ENCODE measurements at regions of chr9 and their contacts with region 1.

Region 1: GRCh38 chr9:83334320-83334719 is 203.9 kb downstream of the FRMD3 start:
- DNase-seq: peak; percentile 24
- ATAC-seq: peak; percentile 21
- H3K4me3 Mint-ChIP-seq: no peak overlapping the region
- H3K27ac Mint-ChIP-seq: no peak overlapping the region
- H3K4me1 Mint-ChIP-seq: no peaks in the 10 kb centered on the region
- H3K27me3 Mint-ChIP-seq: no peaks in the 10 kb centered on the region
- CTCF ChIP-seq: no peak

Region 2: DNA sequence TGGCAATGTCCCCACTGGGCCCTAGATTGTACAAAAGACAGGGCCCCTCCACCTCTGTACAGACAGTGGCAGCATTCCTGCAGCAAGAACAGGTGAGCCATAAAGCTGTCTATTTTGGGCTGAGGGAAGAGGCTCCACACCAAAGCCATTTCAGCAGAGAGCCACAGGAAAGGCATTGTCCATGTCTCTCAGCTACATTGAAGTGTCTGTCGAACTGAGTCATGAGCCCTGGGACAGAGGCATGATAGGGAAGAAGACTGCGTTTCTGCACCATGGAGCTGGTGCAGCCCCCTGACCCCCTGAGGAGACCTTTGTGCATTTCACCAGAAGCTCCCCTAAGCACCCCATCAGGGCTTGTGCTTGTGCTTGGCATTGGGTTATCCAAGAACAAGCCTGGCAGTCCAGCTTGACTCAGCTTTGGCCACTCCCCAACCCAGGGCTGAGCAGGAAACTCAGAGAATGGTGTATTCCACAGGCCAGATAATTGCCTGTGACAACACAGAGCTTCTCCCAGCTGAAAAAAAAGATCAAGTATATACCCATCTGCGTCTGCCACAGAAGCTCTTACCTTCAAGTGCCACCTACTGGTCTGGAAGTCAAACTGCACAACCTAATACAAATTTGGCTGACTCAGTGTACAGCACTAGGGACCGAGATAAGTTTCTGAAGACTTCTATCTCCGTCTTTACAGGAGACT is 209.8 kb after region 1 on chr9:
- CTCF ChIA-PET with region 1: interaction called, 34 read pairs
- POLR2A ChIA-PET with region 1: no interaction called
- intact Hi-C with region 1: no loop called
- DNase-seq: no peak
- ATAC-seq: no peak
- H3K4me3 Mint-ChIP-seq: no peak overlapping the region
- H3K27ac Mint-ChIP-seq: no peak overlapping the region
- H3K4me1 Mint-ChIP-seq: no peaks in the 10 kb centered on the region
- H3K27me3 Mint-ChIP-seq: peaks cover 13% of the 10 kb centered on the region
- CTCF ChIP-seq: no peak